Caco-2 (cell line): ENCODE measurements at regions of chr11 and their contacts with region 1.

Region 1: GRCh38 chr11:68810164-68810563 is 31.6 kb downstream of the CPT1A start:
- DNase-seq: no peak
- H3K4me3 ChIP-seq: no peak overlapping the region
- H3K4me3 Mint-ChIP-seq: no peak overlapping the region
- H3K27ac Mint-ChIP-seq: no peak overlapping the region
- H3K4me1 ChIP-seq: no peaks in the 10 kb centered on the region
- H3K4me1 Mint-ChIP-seq: no peaks in the 10 kb centered on the region
- H3K27me3 ChIP-seq: no peaks in the 10 kb centered on the region
- H3K27me3 Mint-ChIP-seq: no peaks in the 10 kb centered on the region
- CTCF ChIP-seq: no peak

Region 2: DNA sequence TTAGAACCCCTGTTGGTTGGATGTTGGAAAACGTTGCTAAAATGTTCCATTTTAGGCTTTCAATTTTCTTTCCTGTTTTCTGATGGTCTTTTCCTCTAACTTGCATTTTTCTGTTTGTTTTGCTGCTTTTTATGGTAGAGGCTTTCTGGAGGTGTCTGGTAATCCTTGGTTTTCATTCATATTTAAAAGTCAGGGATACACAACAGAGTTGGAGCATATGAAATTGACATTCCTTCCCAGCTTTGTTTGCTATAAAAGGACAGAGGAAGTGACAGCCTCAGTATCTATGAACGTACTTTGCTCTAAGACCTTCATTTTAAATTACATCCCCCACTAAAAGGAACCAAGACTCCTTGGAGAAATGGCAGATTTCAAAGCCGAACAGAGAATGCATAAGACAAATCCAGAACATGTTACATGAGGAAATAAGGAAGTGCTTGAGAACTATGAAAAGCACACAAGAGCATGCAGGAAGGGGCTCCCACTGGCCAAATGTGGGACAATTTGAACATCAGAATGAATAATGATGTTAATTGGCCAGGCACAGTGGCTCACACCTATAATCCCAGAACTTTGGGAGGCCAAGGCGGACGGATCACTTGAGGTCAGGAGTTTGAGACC is 292.9 kb before region 1 on chr11:
- CTCF ChIA-PET with region 1: no interaction called
- POLR2A ChIA-PET with region 1: no interaction called
- intact Hi-C with region 1: no loop called
- DNase-seq: no peak
- H3K4me3 ChIP-seq: no peak overlapping the region
- H3K4me3 Mint-ChIP-seq: no peak overlapping the region
- H3K27ac Mint-ChIP-seq: no peak overlapping the region
- H3K4me1 ChIP-seq: no peaks in the 10 kb centered on the region
- H3K4me1 Mint-ChIP-seq: peaks cover 27% of the 10 kb centered on the region
- H3K27me3 ChIP-seq: no peaks in the 10 kb centered on the region
- H3K27me3 Mint-ChIP-seq: no peaks in the 10 kb centered on the region
- CTCF ChIP-seq: no peak

Region 3: GRCh38 chr11:68763926-68764639 is 46.1 kb before region 1 on chr11:
- CTCF ChIA-PET with region 1: interaction called, 11 read pairs
- POLR2A ChIA-PET with region 1: no interaction called
- intact Hi-C with region 1: no loop called
- DNase-seq: peak in 1 of 2 experiments; percentile 60
- H3K4me3 ChIP-seq: no peak overlapping the region
- H3K4me3 Mint-ChIP-seq: no peak overlapping the region
- H3K27ac Mint-ChIP-seq: peak overlapping the region; percentile 7
- H3K4me1 ChIP-seq: peaks cover 3% of the 10 kb centered on the region
- H3K4me1 Mint-ChIP-seq: peaks cover 7% of the 10 kb centered on the region
- H3K27me3 ChIP-seq: no peaks in the 10 kb centered on the region
- H3K27me3 Mint-ChIP-seq: no peaks in the 10 kb centered on the region
- CTCF ChIP-seq: peak; percentile 41 to 60

Region 4: GRCh38 chr11:68869251-68869960 is 59.2 kb after region 1 on chr11:
- CTCF ChIA-PET with region 1: interaction called, 10 read pairs
- POLR2A ChIA-PET with region 1: no interaction called
- intact Hi-C with region 1: no loop called
- DNase-seq: peak in 1 of 2 experiments; percentile 46
- H3K4me3 ChIP-seq: peak overlapping the region; percentile 43
- H3K4me3 Mint-ChIP-seq: peak overlapping the region; percentile 80
- H3K27ac Mint-ChIP-seq: peak overlapping the region; percentile 11
- H3K4me1 ChIP-seq: no peaks in the 10 kb centered on the region
- H3K4me1 Mint-ChIP-seq: peaks cover 17% of the 10 kb centered on the region
- H3K27me3 ChIP-seq: no peaks in the 10 kb centered on the region
- H3K27me3 Mint-ChIP-seq: no peaks in the 10 kb centered on the region
- CTCF ChIP-seq: peak in 1 of 2 experiments; percentile 38

Region 5: DNA sequence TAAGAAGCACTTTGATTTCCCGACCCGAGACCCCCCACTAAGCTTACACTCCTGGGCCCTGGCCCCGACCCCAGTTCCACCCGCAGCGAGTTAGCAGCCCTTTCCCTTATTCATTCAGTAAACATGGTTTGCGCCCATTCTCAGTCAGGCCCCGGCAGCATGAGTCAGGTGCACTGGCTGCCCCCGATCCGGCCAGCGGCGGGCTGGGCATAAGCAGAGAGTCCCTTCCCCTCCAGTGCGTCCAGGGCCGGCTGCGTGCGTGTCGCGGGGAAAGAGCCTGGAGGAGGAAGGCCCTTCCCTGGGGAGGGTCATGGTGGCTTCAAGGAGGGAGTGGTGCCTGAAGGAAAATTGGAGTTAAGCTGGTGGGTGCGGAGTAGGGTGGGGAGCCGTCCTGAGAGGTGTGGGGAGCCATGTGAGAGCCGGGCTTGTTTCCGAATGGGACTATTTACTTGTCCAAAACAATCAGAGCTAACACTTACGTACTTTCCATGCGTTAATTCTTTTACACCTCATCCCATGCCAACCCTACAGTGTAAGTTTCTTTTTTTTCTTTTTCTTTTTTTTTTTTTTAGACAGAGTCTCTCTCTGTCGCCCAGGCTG is 94.2 kb after region 1 on chr11:
- CTCF ChIA-PET with region 1: no interaction called
- POLR2A ChIA-PET with region 1: no interaction called
- intact Hi-C with region 1: no loop called
- DNase-seq: peak in 1 of 2 experiments; percentile 59
- H3K4me3 ChIP-seq: peak overlapping the region; percentile 84
- H3K4me3 Mint-ChIP-seq: peak overlapping the region; percentile 99
- H3K27ac Mint-ChIP-seq: peak overlapping the region; percentile 97
- H3K4me1 ChIP-seq: peaks cover 20% of the 10 kb centered on the region
- H3K4me1 Mint-ChIP-seq: peaks cover 30% of the 10 kb centered on the region
- H3K27me3 ChIP-seq: no peaks in the 10 kb centered on the region
- H3K27me3 Mint-ChIP-seq: no peaks in the 10 kb centered on the region
- CTCF ChIP-seq: no peak